ENCODE measurements at regions of chr1 and their contacts with region 1.

Region 1: DNA sequence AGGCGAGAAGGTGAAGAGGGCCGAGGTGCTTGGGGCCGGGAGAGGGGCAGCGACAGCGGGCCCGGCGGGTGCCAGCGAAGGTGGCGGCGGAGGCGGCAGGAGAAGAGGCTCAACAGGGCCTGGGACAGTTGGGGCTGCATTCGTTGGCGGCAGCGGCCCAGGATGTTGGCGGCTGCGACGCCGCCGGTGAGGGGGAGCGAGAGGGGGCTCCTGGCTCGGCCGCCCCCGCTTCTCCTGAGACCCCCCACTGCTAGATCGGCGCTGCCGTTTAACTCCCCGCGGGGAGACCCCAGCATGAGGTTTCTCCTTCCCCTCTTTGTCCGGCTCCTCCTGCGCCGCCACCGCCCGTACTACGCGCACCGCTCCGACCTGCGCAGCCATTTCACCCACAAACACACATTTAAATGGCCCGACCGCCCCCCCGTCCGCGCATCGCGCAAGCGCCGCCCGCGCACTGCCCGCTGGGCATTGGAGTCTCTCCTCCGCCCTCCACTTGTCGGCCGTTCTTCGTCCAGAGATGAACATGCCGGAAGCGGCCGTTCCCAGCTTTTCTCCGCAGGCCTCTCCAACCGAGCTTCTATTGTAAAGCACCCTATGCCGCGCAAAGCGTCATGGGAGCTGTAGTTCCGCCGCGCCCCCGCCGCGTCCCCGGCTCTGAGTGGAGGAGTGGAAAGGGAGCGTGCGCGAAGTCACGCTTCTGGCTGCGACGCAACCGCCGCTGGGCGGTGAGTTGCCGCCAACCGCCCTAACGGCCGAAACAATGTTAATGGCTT is at the start of gene RSBN1:
- DNase-seq: peak; percentile 99
- ATAC-seq: peak; percentile 97
- H3K4me3 Mint-ChIP-seq: peak within 1 kb of the TSS; percentile 98
- H3K27ac Mint-ChIP-seq: peak within 1 kb of the TSS; percentile 98
- H3K4me1 Mint-ChIP-seq: peaks cover 32% of the 10 kb centered on the region
- H3K27me3 Mint-ChIP-seq: no peaks in the 10 kb centered on the region
- total RNA-seq, gene RSBN1: 27.3 to 29.9 TPM

Region 2: DNA sequence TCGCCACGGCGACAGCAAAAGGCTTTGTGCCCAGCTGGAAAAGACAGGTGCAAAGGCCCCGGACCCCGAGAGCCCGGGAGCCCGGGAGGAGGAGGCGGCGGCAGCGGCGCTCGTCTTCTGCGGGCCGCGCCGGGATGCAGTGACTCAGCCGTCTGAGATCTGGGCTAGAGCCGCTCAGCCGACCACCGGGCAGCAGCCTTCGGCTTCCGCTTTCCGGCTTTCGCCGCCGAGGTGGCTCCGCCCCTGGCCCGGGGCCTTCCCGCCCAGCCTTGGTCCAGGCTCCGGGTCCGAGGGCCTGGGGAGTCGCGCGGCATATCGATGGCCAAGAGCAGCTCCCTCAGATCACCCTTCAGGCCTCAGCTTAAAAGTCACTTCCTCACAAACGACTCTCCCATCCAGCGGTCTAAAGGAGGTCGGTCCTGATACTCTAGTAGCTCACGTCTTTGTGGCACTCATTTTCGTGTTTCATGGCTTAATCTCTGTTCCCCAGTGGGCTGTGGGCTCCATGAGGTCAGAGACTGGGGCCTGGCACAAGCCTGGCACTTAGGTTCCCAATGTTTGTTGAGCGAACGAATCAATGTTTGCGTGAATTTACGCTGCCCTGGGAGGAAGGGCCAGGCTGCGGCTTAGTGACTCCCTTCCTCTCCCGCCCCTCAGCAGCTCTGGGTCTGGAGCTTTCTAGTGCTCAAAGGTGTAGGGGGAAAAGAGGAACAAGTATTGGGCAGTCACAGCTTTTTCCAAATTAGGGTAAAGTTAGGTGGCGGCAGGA is 52.6 kb before region 1 on chr1 and contains the start of gene PHTF1:
- CTCF ChIA-PET with region 1: interaction called, 5 read pairs
- POLR2A ChIA-PET with region 1: interaction called, 23 read pairs
- DNase-seq: peak; percentile 67
- ATAC-seq: peak; percentile 85
- H3K4me3 Mint-ChIP-seq: peak within 1 kb of the TSS; percentile 90
- H3K27ac Mint-ChIP-seq: peak within 1 kb of the TSS; percentile 96
- H3K4me1 Mint-ChIP-seq: peaks cover 33% of the 10 kb centered on the region
- H3K27me3 Mint-ChIP-seq: no peaks in the 10 kb centered on the region
- total RNA-seq, gene PHTF1: 24.8 to 25.2 TPM

Region 3: DNA sequence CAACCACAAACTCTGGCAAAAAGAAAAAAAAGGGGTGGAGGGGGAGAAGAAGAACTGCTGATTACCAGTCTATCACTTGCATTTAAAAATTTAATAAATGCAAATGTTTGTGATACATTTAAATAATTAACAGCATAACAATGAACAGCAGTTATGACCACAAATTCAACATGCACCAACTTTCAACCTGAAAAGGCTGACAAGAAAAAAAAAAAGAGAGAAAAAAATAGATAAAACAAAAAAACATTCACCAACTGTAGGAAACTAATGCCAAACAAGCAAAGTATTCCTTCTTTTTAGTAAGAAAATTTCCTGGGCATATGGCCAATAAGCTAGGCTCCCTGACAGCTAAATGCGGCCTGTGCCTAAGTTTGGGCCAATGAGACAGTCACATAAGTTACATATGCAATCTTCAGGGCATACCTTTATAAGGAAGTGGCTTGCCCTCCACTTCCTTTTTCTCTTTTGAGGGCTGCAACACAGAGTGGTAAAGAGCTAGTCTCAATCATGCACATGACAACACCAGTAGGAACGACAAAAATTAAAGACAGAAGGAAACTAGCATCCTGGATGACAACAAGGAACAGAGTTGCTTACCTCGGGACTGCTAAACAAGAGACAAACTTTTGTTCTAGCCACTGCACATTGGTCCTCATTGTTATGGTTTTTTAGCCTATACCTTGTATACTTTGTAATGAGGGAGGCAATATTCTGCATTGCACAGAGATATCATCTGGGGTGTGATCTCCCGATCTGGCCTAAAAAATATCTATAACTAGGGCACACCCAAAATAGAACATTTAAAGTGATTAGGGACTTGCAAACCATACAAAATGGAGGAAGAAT is 28.6 kb before region 1 on chr1:
- CTCF ChIA-PET with region 1: interaction called, 8 read pairs
- POLR2A ChIA-PET with region 1: interaction called, 13 read pairs
- DNase-seq: peak; percentile 76
- ATAC-seq: peak; percentile 97
- H3K4me3 Mint-ChIP-seq: peak overlapping the region; percentile 73
- H3K27ac Mint-ChIP-seq: peak overlapping the region; percentile 88
- H3K4me1 Mint-ChIP-seq: peaks cover 23% of the 10 kb centered on the region
- H3K27me3 Mint-ChIP-seq: no peaks in the 10 kb centered on the region